ENCODE measurements at regions of chr5 and their contacts with region 1.

Region 1: DNA sequence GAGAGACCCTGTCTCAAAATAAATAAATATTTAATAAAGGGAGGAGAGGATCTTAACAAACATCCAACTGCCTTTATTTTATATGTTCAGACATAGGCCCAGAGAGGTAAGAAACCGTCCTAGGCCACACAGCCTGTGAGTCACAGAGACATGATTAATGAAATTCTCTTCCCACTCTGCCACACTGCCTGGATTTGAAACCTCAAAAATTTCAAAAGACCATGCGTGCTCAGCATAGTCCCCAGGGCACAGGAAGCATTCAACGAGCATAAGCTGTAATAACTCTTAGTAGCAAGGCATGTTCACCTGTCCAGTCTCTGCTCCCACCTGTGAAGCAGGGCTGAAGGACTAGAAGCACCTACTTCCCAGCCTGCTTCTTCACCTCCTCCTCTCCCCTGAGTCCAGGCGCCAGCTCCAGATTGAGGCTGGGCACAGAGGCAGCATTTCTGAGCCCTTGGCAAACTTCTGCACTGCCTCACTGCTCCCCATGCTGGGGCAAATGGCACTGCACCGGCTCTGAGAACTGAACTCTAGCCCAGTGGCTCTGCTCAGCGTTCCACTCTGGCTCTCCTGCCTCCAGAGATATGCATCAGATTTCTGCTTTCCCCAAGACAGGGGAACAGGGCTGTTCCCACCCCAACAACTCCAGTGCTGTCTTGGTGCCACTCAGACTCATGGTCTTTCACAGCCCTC is 1.1 kb downstream of the FAT2 start:
- DNase-seq: no peak
- H3K4me3 ChIP-seq: peak overlapping the region in 2 of 3 donors; percentile 44 to 53
- H3K27ac ChIP-seq: peak overlapping the region; percentile 15 to 69
- H3K4me1 ChIP-seq: no peaks in the 10 kb centered on the region
- H3K27me3 ChIP-seq: no peaks in the 10 kb centered on the region
- CTCF ChIP-seq: no peak
- POLR2A ChIP-seq: no peak

Region 2: DNA sequence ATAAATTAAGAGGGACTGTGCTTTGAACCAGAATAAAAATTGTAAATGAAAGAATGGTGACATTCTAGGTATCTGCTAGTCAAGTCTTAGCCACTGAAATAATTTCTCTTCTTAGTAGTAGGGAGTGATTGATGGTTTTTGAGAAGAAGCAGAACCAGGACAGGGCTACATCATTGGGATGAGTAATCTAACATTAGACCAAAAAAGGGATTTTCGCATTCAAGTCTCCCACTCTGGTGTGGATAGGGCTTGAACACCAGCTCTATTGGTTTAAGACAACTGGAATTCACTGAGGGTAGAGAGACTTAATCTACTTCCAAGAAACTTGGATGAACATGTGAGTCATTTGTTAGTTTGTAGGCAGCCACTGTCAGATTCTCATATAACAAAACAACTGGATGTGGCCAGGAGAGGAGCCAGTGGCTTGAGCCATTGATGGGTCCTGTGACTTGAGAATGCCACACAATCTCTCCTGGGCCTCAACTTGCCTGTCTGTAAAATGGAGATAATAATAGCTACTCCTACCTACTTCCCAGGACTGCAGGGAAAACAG is 15.5 kb before region 1 on chr5:
- intact Hi-C with region 1: loop called (anchors 2 kb)
- DNase-seq: no peak
- H3K4me3 ChIP-seq: no peak overlapping the region
- H3K27ac ChIP-seq: peak overlapping the region in 1 of 2 donors; percentile 80
- H3K4me1 ChIP-seq: peaks cover 0 to 3% of the 10 kb centered on the region in 2 donors
- H3K27me3 ChIP-seq: no peaks in the 10 kb centered on the region
- CTCF ChIP-seq: no peak
- POLR2A ChIP-seq: no peak

Region 3: GRCh38 chr5:151896031-151896691 is 306.1 kb after region 1 on chr5:
- intact Hi-C with region 1: no loop called
- DNase-seq: no peak
- H3K4me3 ChIP-seq: no peak overlapping the region
- H3K27ac ChIP-seq: no peak overlapping the region
- H3K4me1 ChIP-seq: no peaks in the 10 kb centered on the region
- H3K27me3 ChIP-seq: no peaks in the 10 kb centered on the region
- CTCF ChIP-seq: no peak
- POLR2A ChIP-seq: no peak

Measured in breast epithelium (tissue), 4 donors.